Activated CD8-positive, alpha-beta memory T cell treated with anti-CD3 and anti-CD28 coated beads, Interleukin-2, amount 10 ng/mL, durations not matched to agents 7 days and 5 days (primary cell): ENCODE measurements at regions of chrX and their contacts with region 1.

Region 1: GRCh38 chrX:19904778-19905367 is 17.5 kb upstream of the SH3KBP1 start:
- DNase-seq: peak; percentile 42
- ATAC-seq: peak; percentile 76
- H3K4me3 Mint-ChIP-seq: no peak overlapping the region
- H3K27ac Mint-ChIP-seq: no peak overlapping the region
- H3K4me1 Mint-ChIP-seq: peaks cover 12% of the 10 kb centered on the region
- H3K27me3 Mint-ChIP-seq: no peaks in the 10 kb centered on the region

Region 2: DNA sequence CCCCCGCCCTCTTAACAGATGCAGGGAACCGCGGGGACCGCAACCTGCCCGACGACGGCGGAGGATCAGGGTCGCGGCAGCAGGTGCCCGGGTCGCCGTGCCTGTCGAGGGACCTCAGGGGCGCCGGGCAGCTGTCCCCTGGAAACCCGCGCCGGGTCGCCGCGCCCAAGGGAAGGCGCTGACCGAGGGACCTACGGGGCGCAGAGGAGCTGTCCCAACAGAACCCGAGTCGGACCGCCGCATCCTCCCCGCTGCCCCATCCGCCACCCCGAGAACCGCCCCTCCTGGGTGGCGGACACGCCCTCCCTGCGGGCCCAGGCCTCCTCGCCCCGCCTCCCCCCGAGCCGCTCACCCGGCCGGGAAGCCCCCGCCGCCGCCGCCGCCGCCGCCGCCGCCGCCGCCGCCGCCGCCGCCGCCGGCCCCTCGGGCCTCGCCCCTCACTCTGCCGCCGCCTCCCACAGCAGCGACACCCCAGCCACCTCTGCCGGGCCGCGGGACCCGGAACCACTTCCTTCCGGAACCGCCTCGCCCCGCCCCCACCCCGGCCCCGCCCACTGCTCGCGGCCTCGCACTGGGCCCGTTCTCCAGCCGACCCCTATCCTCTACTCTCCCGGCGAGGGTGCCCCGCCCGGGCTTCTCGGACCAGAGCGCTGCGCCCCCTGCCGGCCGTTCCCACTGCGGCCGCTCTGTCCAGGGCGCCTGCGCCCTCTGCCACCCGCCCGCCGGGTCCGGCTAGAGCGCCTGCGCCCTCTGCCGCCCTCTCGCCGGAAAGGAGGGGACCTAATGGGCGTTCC is 85.9 kb after region 1 on chrX and contains the start of gene BCLAF3:
- CTCF ChIA-PET with region 1: interaction called, 15 read pairs
- DNase-seq: peak; percentile 92
- ATAC-seq: peak; percentile 96
- H3K4me3 Mint-ChIP-seq: peak within 1 kb of the TSS; percentile 86
- H3K27ac Mint-ChIP-seq: peak within 1 kb of the TSS; percentile 83
- H3K4me1 Mint-ChIP-seq: peaks cover 16% of the 10 kb centered on the region
- H3K27me3 Mint-ChIP-seq: no peaks in the 10 kb centered on the region
- total RNA-seq, gene BCLAF3: 5.5 to 7.6 TPM

Region 3: DNA sequence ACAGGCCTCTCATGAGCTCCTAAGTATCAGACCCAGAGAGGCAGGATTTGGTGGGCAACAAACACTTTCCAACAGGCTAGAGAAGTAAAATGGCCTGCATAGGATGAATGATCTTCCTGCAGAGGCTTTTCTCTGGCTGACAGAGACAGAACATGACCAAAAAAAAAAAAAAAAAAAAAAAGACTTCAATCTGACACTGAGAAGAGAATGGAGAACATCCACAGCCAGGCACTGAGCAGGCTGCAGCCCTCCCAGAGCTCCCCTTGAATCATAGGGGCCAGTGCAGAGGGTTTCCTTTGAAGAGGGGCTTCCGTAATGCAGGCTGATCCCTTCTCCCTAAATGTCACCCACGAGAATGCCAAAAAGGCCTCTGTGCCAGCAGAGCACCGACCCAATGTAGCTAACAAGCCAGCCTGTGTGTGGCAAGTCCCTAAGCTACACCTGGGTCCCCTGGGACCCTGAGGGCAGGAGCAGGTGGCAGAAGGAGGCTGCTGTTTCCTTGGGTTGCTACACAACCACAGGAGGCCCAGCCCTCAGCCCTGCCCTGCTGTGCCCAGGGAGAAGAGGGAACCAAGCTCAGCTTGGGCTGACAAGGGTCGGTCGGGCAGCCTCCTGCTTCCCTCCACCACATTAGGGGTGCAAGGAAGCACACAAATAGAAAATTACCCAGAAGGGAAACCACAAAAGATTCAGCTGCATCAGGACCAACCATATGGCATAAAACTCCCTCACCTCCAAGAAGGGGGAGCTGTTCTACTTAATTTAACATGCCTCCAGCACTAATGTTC is 156.3 kb after region 1 on chrX:
- CTCF ChIA-PET with region 1: interaction called, 10 read pairs
- DNase-seq: no peak
- ATAC-seq: no peak
- H3K4me3 Mint-ChIP-seq: no peak overlapping the region
- H3K27ac Mint-ChIP-seq: no peak overlapping the region
- H3K4me1 Mint-ChIP-seq: peaks cover 16% of the 10 kb centered on the region
- H3K27me3 Mint-ChIP-seq: peaks cover 3% of the 10 kb centered on the region

Region 4: DNA sequence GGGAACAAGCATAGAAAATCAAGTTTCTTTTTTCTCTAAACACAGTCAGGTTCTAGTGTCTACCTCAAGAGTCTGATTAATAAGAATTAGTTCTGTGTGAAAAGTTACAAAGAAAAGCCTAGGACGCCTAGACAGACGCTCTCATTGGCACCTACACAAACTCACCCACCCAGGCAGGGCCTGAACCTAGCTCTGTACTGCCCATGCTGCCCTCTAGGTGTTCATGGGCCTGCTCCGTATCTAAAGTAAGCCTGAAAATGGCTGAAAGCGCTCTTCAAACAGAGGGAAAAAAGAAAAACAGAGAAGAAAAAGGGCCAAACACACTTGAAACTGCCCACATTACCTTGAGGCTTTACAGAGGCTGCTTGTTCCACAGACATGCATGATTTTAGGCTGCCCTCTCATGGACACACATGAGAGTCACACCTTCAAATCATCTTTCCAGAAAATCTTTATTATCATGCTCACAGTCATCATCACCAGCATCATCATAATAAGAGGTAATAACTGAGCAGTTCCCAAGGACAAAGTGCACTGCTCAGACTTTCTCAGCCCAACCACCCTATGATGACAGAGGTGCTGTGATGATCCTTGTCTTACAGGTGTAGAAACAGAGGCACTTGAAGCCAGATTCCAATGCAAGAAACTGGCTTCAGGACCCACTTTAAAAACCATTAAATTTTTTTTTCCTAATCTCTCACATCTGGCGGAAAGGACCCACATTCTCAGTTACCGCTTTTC is 162.3 kb after region 1 on chrX:
- CTCF ChIA-PET with region 1: interaction called, 12 read pairs
- DNase-seq: no peak
- ATAC-seq: peak; percentile 66
- H3K4me3 Mint-ChIP-seq: no peak overlapping the region
- H3K27ac Mint-ChIP-seq: no peak overlapping the region
- H3K4me1 Mint-ChIP-seq: peaks cover under 1% of the 10 kb centered on the region
- H3K27me3 Mint-ChIP-seq: no peaks in the 10 kb centered on the region